Activated CD4-positive, alpha-beta T cell treated with anti-CD3 and anti-CD28 coated beads for 36 hours (primary cell): ENCODE measurements at regions of chr2 and their contacts with region 1.

Region 1: GRCh38 chr2:148603562-148603920 is 41.0 kb upstream of the EPC2 start:
- DNase-seq: peak; percentile 49
- ATAC-seq: peak; percentile 92
- H3K4me3 Mint-ChIP-seq: no peak overlapping the region
- H3K27ac Mint-ChIP-seq: peak overlapping the region; percentile 88
- H3K4me1 Mint-ChIP-seq: peaks cover 18% of the 10 kb centered on the region
- H3K27me3 Mint-ChIP-seq: peaks cover 17% of the 10 kb centered on the region

Region 2: DNA sequence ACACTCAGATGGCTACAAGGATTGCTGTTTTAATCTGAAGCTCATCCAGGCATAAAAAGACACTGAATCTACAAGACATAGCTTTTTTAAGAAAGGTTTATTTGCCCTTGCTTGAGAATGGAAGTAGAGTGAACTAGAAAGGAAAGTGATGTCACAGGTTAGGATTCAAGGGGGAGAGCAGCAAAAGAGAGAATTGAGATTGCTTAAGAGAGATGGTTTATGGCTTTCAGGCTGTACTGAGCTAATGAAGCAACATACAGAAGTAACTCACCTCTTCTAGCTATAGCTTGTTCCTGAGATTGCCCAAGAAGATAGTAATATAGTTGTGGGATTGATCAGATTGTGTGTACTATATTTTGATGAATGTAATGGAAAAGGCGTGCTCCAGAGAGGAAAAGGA is 784.8 kb before region 1 on chr2:
- CTCF ChIA-PET with region 1: no interaction called
- POLR2A ChIA-PET with region 1: no interaction called
- intact Hi-C with region 1: no loop called
- DNase-seq: no peak
- ATAC-seq: no peak
- H3K4me3 Mint-ChIP-seq: no peak overlapping the region
- H3K27ac Mint-ChIP-seq: no peak overlapping the region
- H3K4me1 Mint-ChIP-seq: no peaks in the 10 kb centered on the region
- H3K27me3 Mint-ChIP-seq: peaks cover 12% of the 10 kb centered on the region

Region 3: GRCh38 chr2:148552675-148553331 is 50.7 kb before region 1 on chr2:
- CTCF ChIA-PET with region 1: no interaction called
- POLR2A ChIA-PET with region 1: no interaction called
- intact Hi-C with region 1: loop called in 1 of 2 experiments (anchors 2 kb)
- DNase-seq: peak; percentile 51
- ATAC-seq: peak; percentile 78
- H3K4me3 Mint-ChIP-seq: no peak overlapping the region
- H3K27ac Mint-ChIP-seq: no peak overlapping the region
- H3K4me1 Mint-ChIP-seq: peaks cover 2% of the 10 kb centered on the region
- H3K27me3 Mint-ChIP-seq: no peaks in the 10 kb centered on the region

Region 4: DNA sequence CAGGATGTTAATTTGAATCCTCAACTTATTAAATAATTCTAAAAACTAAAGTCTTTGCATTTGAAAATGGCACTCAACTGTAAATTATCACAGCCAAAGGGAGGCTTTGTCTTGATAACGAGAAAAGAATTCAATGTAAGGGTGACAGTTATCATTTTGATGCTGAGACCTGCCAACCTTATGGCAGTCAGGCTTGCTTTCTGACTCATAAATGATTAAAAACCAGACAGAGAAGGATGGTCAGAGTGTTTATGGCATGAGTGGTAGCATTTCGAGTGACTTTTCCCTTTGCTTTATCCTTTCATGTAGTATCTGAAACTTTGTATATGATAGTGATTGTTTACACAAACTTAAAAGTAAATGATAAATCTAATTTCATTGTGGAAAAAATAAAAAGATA is 12.9 kb before region 1 on chr2:
- CTCF ChIA-PET with region 1: interaction called, 3 read pairs
- POLR2A ChIA-PET with region 1: no interaction called
- intact Hi-C with region 1: loop called (anchors 1 kb)
- DNase-seq: no peak
- ATAC-seq: peak; percentile 88
- H3K4me3 Mint-ChIP-seq: no peak overlapping the region
- H3K27ac Mint-ChIP-seq: no peak overlapping the region
- H3K4me1 Mint-ChIP-seq: no peaks in the 10 kb centered on the region
- H3K27me3 Mint-ChIP-seq: no peaks in the 10 kb centered on the region

Region 5: GRCh38 chr2:148614322-148615049 is 10.9 kb after region 1 on chr2:
- CTCF ChIA-PET with region 1: interaction called, 6 read pairs
- POLR2A ChIA-PET with region 1: interaction called, 3 read pairs
- intact Hi-C with region 1: loop called in 1 of 2 experiments (anchors 1 kb)
- DNase-seq: peak; percentile 32
- ATAC-seq: peak; percentile 93
- H3K4me3 Mint-ChIP-seq: no peak overlapping the region
- H3K27ac Mint-ChIP-seq: peak overlapping the region; percentile 44
- H3K4me1 Mint-ChIP-seq: peaks cover 10% of the 10 kb centered on the region
- H3K27me3 Mint-ChIP-seq: peaks cover 3% of the 10 kb centered on the region

Region 6: DNA sequence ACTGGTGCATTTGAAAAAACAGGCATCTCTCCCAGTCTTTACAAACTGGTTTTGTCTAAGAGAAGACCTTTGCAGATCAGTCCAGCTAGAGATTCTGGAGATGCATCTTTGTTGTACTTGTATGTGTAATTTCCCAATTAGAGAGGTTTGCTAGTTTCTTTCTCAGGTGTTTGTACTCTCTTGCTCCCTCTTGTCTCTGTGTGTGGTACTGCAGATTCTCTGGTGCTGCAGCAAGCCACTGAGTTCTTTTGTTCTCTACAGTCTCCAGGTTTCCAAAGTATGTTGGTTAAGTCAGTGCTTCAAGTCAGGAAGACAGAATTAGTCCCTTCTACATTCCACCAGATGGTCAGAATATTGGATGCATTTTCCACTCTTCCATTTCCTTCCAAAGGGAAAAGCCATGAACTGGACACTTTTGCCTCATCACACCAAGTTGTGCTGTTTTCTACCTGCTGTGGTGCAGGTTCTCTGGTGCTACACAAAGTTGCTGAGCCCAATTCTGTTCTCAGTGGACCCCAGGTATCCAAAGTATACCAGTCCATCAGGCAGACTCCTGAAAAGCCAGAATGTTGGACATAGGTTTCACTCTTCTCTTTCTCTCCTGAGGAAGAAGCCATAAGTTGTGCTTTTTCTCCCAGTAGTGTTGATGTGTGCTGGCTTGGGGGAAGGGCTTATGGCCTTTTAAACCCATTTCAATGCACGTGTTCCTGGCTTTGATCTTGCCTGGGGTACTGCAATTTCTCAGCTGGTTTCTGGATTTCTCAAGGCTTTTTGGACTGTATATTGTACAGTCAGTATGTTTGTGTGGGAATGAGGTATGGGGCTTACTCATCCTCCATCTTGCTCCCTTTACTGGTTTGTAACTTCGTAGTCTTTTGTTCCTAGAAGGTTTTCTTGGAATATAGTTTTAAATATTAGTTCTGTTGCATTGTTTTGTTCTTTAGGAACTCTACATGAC is 70.8 kb after region 1 on chr2:
- CTCF ChIA-PET with region 1: no interaction called
- POLR2A ChIA-PET with region 1: no interaction called
- intact Hi-C with region 1: loop called in 1 of 2 experiments (anchors 1 kb)
- DNase-seq: peak; percentile 52
- ATAC-seq: peak; percentile 75
- H3K4me3 Mint-ChIP-seq: no peak overlapping the region
- H3K27ac Mint-ChIP-seq: peak overlapping the region; percentile 64
- H3K4me1 Mint-ChIP-seq: peaks cover 59% of the 10 kb centered on the region
- H3K27me3 Mint-ChIP-seq: no peaks in the 10 kb centered on the region

Region 7: GRCh38 chr2:148813603-148814065 is 210.1 kb after region 1 on chr2:
- CTCF ChIA-PET with region 1: no interaction called
- POLR2A ChIA-PET with region 1: no interaction called
- intact Hi-C with region 1: loop called (anchors 1 to 2 kb)
- DNase-seq: peak; percentile 88
- ATAC-seq: peak; percentile 98
- H3K4me3 Mint-ChIP-seq: no peak overlapping the region
- H3K27ac Mint-ChIP-seq: no peak overlapping the region
- H3K4me1 Mint-ChIP-seq: peaks cover 22% of the 10 kb centered on the region
- H3K27me3 Mint-ChIP-seq: peaks cover 11% of the 10 kb centered on the region